ENCODE measurements at regions of chr12 and their contacts with region 1.

Region 1: DNA sequence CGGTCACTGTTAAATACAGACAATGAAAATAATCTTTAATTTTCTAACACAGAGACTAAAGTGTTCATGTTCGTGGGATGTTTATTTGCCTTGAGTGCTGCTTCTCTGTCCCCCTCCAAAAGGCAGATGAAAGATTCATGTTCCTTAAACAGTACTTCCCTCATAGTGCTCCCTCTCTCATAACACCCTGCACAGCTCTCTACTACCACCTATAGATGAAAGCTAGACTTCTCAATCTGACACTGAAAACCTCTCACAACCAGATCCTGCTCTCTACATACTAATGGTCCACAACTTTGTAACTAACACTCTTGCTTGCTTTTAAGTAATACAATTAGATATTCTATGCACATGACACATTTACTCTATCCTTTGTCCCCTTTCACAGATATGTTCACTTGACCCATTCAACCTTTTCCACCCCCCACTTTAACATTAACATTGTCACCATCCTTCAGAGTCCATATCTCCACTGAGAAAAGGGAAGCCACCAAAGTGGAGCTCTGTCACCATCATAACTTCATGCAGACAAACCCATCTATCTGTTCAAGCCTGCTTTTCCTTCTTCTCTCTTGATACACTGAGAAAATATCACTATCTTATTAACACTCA is 266.4 kb upstream of the USP15 start:
- DNase-seq: no peak
- H3K4me3 Mint-ChIP-seq: no peak overlapping the region
- H3K27ac Mint-ChIP-seq: no peak overlapping the region
- H3K4me1 Mint-ChIP-seq: no peaks in the 10 kb centered on the region
- H3K27me3 Mint-ChIP-seq: peaks cover 5% of the 10 kb centered on the region

Region 2: DNA sequence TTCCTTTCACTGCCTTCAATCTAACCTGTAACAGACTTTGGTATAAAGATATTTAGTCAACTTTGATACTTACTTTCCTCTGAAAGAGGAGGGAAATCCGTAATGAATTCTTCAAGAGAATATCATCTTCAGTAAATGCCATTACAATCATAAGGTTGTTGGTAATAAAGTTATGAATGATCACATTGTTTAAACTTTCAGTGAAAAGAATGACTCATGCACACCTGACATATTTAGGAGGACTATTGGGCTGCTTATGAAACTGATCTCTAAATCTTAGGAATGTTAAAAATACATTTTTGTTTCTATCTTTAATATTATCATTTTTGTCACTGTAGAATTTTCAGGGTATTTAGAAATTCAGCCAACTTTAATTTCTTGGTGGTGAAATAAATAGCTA is 1923.3 kb before region 1 on chr12:
- intact Hi-C with region 1: no loop called
- DNase-seq: no peak
- H3K4me3 Mint-ChIP-seq: no peak overlapping the region
- H3K27ac Mint-ChIP-seq: no peak overlapping the region
- H3K4me1 Mint-ChIP-seq: no peaks in the 10 kb centered on the region
- H3K27me3 Mint-ChIP-seq: no peaks in the 10 kb centered on the region

Region 3: DNA sequence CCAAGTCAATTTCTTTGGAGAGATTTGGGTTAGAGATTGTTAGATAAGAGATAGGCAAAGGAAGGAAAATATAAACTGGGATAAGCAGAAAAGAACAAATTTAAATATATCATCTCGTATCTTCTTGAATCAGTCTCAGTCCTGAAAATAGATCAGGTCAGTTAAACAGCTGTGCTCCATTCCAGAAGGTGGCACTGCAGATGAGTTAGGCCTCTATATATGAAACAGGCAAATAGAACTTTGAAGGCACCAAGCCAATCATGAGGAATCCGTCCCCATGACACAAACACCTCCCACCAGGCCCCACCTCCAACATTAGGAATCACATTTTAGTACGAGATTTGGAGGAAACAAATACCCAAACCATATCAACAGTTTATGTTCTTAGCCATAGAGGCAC is 339.1 kb before region 1 on chr12:
- intact Hi-C with region 1: loop called (anchors 10 kb)
- DNase-seq: no peak
- H3K4me3 Mint-ChIP-seq: no peak overlapping the region
- H3K27ac Mint-ChIP-seq: no peak overlapping the region
- H3K4me1 Mint-ChIP-seq: no peaks in the 10 kb centered on the region
- H3K27me3 Mint-ChIP-seq: no peaks in the 10 kb centered on the region